Naive thymus-derived CD4-positive, alpha-beta T cell (primary cell): ENCODE measurements at regions of chr5 and their contacts with region 1.

Region 1: GRCh38 chr5:140372971-140373487 is 13.0 kb downstream of the SLC4A9 start:
- DNase-seq: peak in 6 of 9 donors; percentile 22 to 47 (median 36)
- ATAC-seq: peak; percentile 76
- H3K4me3 ChIP-seq: no peak overlapping the region
- H3K4me3 Mint-ChIP-seq: no peak overlapping the region
- H3K27ac ChIP-seq: no peak overlapping the region
- H3K27ac Mint-ChIP-seq: peak overlapping the region in 1 of 9 donors; percentile 4
- H3K4me1 ChIP-seq: no peaks in the 10 kb centered on the region
- H3K4me1 Mint-ChIP-seq: peaks cover 0 to 8% (median 4%) of the 10 kb centered on the region in 7 donors
- H3K27me3 ChIP-seq: no peaks in the 10 kb centered on the region
- H3K27me3 Mint-ChIP-seq: no peaks in the 10 kb centered on the region

Region 2: GRCh38 chr5:140632150-140633020 is 259.4 kb after region 1 on chr5:
- CTCF ChIA-PET with region 1: interaction called, 4 read pairs
- POLR2A ChIA-PET with region 1: no interaction called
- intact Hi-C with region 1: loop called (anchors 1 kb)
- DNase-seq: peak; percentile 29 to 64 (median 51)
- ATAC-seq: peak; percentile 81
- H3K4me3 ChIP-seq: peak overlapping the region; percentile 87
- H3K4me3 Mint-ChIP-seq: peak overlapping the region; percentile 89 to 99 (median 92)
- H3K27ac ChIP-seq: peak overlapping the region; percentile 41
- H3K27ac Mint-ChIP-seq: peak overlapping the region; percentile 29 to 88 (median 79)
- H3K4me1 ChIP-seq: peaks cover 0 to 9% of the 10 kb centered on the region in 2 donors
- H3K4me1 Mint-ChIP-seq: peaks cover 16 to 36% (median 17%) of the 10 kb centered on the region in 7 donors
- H3K27me3 ChIP-seq: no peaks in the 10 kb centered on the region
- H3K27me3 Mint-ChIP-seq: peaks cover 0 to 26% (median 0%) of the 10 kb centered on the region in 5 donors